ENCODE measurements at regions of chr1 and their contacts with region 1.

Region 1: DNA sequence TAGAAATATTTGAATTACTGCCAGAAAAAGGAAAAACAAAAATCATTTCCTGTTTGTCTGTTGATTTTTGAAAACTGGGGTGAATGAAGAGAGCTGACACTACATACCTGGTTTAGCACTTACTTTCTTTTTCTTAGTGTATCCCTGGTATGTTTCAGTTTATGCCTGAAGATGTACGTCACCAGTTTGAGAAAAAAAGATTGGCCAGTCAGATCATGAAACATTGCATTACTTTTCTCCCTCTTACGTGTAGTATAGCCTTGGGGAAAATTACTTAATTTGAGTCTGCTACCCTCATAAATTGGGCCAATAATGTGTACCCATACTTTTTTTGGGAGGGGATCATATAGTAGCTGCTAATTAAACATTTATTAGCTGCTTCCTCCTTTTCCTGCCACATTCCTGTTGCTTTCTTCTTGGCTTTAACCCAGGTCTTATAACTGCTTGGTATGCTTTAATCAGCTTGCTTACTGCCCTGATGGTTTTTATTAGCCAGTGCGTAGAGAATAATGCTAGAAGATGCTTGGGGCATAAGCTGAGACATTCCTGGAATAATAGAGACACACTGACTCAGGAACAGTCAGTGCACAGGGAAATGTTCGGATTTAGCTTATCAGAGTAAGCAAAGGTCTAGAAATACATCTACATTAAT is 32.1 kb downstream of the RABGAP1L start:
- DNase-seq: no peak
- ATAC-seq: no peak
- H3K4me3 ChIP-seq: no peak overlapping the region
- H3K27ac ChIP-seq: no peak overlapping the region
- H3K4me1 ChIP-seq: peaks cover 3 to 6% of the 10 kb centered on the region in 2 experiments; a peak in 2 of 5 replicates
- H3K27me3 ChIP-seq: no peaks in the 10 kb centered on the region
- CTCF ChIP-seq: no peak
- EP300 ChIP-seq: no peak
- POLR2A ChIP-seq: no peak
- RAD21 ChIP-seq: no peak

Region 2: DNA sequence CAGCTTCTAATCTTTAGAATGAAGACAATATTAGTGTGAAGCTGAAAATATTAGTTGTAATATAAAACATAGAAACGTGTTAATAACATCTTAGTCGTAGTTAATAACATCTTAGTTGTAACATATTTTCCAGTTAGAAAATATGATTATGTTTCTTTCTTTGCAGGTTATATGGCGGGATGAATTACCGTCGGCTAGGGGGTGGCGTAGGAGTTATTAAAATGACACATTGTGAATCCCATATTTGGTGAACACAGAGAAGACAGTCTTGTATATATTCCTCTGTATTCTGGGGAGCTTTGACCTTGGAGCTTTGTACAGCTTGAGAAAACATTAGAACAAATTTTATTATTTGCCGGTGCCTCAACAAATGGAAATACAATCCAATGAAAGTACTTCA is 406.4 kb before region 1 on chr1:
- CTCF ChIA-PET with region 1: no interaction called
- POLR2A ChIA-PET with region 1: no interaction called
- in situ Hi-C with region 1: no loop called
- intact Hi-C with region 1: no loop called
- DNase-seq: no peak
- ATAC-seq: no peak
- H3K4me3 ChIP-seq: no peak overlapping the region
- H3K27ac ChIP-seq: no peak overlapping the region
- H3K4me1 ChIP-seq: no peaks in the 10 kb centered on the region
- H3K27me3 ChIP-seq: no peaks in the 10 kb centered on the region
- CTCF ChIP-seq: no peak
- EP300 ChIP-seq: no peak
- POLR2A ChIP-seq: no peak
- RAD21 ChIP-seq: no peak

Region 3: DNA sequence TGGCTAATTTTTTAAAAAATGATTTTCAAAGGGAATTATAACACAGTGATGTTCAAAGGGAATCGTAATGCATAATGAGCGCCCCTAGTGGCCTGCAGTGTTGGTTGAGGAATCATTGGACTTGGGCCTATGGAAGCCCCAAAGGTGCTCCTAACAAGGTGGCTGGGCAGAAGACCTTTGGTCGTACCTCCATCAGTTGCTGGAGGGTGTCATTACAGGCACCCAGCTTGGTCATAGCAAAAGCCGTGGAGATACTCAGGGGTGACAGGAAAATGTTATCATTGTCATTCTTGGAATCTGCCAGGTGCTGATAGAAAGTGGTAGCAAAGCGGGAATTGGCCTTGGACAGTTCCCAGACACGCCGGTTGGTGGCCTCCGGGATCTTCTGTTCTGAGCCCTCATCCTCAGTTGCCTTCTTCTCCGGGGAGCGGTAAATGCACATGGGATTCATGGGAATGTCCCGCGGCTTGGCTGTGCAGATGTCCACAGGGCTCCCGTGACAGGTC is 277.0 kb before region 1 on chr1:
- CTCF ChIA-PET with region 1: no interaction called
- POLR2A ChIA-PET with region 1: no interaction called
- in situ Hi-C with region 1: no loop called
- intact Hi-C with region 1: no loop called
- DNase-seq: peak; percentile 74 to 81 (median 76)
- ATAC-seq: peak; percentile 88
- H3K4me3 ChIP-seq: no peak overlapping the region
- H3K27ac ChIP-seq: no peak overlapping the region
- H3K4me1 ChIP-seq: peaks cover 4 to 20% of the 10 kb centered on the region in 2 experiments; a peak in 4 of 5 replicates
- H3K27me3 ChIP-seq: no peaks in the 10 kb centered on the region
- CTCF ChIP-seq: peak; percentile 72 to 93 (median 82)
- EP300 ChIP-seq: 0 out of 2 replicates have a peak, but pooled peaks have one; percentile 15
- POLR2A ChIP-seq: no peak
- RAD21 ChIP-seq: peak; percentile 12 to 61; a peak in 2 of 4 replicates

Region 4: GRCh38 chr1:174123843-174124242 is 67.5 kb before region 1 on chr1:
- CTCF ChIA-PET with region 1: no interaction called
- POLR2A ChIA-PET with region 1: no interaction called
- in situ Hi-C with region 1: loop called (anchors 5 kb)
- intact Hi-C with region 1: loop called (anchors 1 kb)
- DNase-seq: no peak
- ATAC-seq: no peak
- H3K4me3 ChIP-seq: no peak overlapping the region
- H3K27ac ChIP-seq: no peak overlapping the region
- H3K4me1 ChIP-seq: no peaks in the 10 kb centered on the region
- H3K27me3 ChIP-seq: no peaks in the 10 kb centered on the region; a peak in 1 of 5 replicates
- CTCF ChIP-seq: no peak
- EP300 ChIP-seq: no peak
- POLR2A ChIP-seq: no peak
- RAD21 ChIP-seq: no peak

Region 5: GRCh38 chr1:174204697-174205308 is 13.4 kb after region 1 on chr1:
- CTCF ChIA-PET with region 1: no interaction called
- POLR2A ChIA-PET with region 1: interaction called, 10 read pairs
- in situ Hi-C with region 1: no loop called
- intact Hi-C with region 1: no loop called
- DNase-seq: peak in 2 of 4 experiments; percentile 46 to 83
- ATAC-seq: peak; percentile 98
- H3K4me3 ChIP-seq: peak overlapping the region; percentile 17
- H3K27ac ChIP-seq: peak overlapping the region; percentile 79
- H3K4me1 ChIP-seq: peaks cover 4 to 19% of the 10 kb centered on the region in 2 experiments; a peak in 2 of 5 replicates
- H3K27me3 ChIP-seq: no peaks in the 10 kb centered on the region
- CTCF ChIP-seq: no peak
- EP300 ChIP-seq: no peak
- POLR2A ChIP-seq: peak; percentile 77
- RAD21 ChIP-seq: no peak